ENCODE measurements at regions of chr6 and their contacts with region 1.

Region 1: DNA sequence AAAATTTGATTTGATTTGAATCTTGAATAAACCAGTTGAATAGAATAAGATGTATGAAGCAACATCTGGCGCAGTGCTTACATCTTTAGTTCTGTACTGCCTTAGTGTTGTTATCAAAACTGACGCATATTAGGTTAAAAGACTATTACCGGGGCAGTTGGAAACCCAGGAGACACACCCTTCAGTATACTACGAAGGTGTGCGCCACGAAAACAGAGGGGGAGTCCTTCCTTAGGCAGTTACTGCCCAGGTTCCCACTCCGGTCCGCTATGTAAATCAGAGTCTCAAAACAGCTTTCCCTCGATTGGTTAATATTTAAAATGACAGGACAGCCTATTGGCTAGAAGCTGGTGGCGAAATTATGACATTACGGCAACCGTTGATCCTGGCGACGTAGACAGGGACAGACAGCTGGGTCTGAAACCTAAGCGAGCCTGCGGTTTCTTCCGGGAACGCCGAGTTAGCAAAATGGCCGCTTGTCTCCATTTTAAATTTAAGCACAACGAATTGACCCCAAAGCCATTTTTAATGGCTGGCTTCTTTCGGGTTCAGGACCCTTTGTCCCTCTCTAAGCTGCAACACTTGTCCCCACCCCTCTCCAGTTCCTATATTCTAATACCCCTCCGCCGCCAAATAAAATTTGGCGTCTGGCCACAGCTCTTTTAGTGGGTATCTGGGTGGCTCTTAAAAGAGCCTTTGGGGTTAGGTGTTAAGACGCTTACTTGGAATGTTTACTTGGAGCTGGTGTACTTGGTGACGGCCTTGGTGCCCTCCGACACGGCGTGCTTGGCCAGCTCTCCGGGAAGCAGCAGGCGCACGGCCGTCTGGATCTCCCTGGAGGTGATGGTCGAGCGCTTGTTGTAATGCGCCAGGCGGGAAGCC is 35.8 kb downstream of the HFE start:
- DNase-seq: peak; percentile 79 to 99 (median 86)
- ATAC-seq: peak; percentile 62
- H3K4me3 ChIP-seq: peak overlapping the region; percentile 72
- H3K27ac ChIP-seq: peak overlapping the region; percentile 95
- H3K4me1 ChIP-seq: peaks cover 3 to 7% of the 10 kb centered on the region in 2 experiments; a peak in 4 of 5 replicates
- H3K27me3 ChIP-seq: no peaks in the 10 kb centered on the region
- CTCF ChIP-seq: peak in 1 of 3 experiments; percentile 23; a peak in 1 of 6 replicates
- EP300 ChIP-seq: peak; percentile 99
- POLR2A ChIP-seq: no peak; the same call in none of the 2 replicates
- RAD21 ChIP-seq: 0 out of 4 replicates have a peak, but pooled peaks of 1 of the 2 experiments have one; percentile 6

Region 2: GRCh38 chr6:25966711-25967110 is 156.3 kb before region 1 on chr6:
- CTCF ChIA-PET with region 1: no interaction called
- POLR2A ChIA-PET with region 1: no interaction called
- in situ Hi-C with region 1: no loop called
- intact Hi-C with region 1: no loop called
- DNase-seq: no peak
- ATAC-seq: no peak
- H3K4me3 ChIP-seq: no peak overlapping the region
- H3K27ac ChIP-seq: no peak overlapping the region
- H3K4me1 ChIP-seq: peaks cover 11 to 16% of the 10 kb centered on the region in 2 experiments
- H3K27me3 ChIP-seq: no peaks in the 10 kb centered on the region
- CTCF ChIP-seq: no peak
- EP300 ChIP-seq: no peak
- POLR2A ChIP-seq: no peak
- RAD21 ChIP-seq: no peak

Region 3: GRCh38 chr6:26054857-26055669 is 68.0 kb before region 1 on chr6:
- CTCF ChIA-PET with region 1: interaction called, 3 read pairs
- POLR2A ChIA-PET with region 1: interaction called, 33 read pairs
- in situ Hi-C with region 1: no loop called
- intact Hi-C with region 1: loop called (anchors 2 kb)
- DNase-seq: peak; percentile 81 to 95 (median 88)
- ATAC-seq: peak; percentile 68
- H3K4me3 ChIP-seq: peak overlapping the region; percentile 60
- H3K27ac ChIP-seq: peak overlapping the region; percentile 94
- H3K4me1 ChIP-seq: peaks cover 7 to 29% of the 10 kb centered on the region in 2 experiments
- H3K27me3 ChIP-seq: no peaks in the 10 kb centered on the region
- CTCF ChIP-seq: peak; percentile 24 to 42 (median 29); a peak in 3 of 6 replicates
- EP300 ChIP-seq: peak; percentile 34
- POLR2A ChIP-seq: peak; percentile 95
- RAD21 ChIP-seq: peak in 1 of 2 experiments; percentile 59; a peak in 2 of 4 replicates

Region 4: GRCh38 chr6:26097268-26097875 is 25.7 kb before region 1 on chr6:
- CTCF ChIA-PET with region 1: no interaction called
- POLR2A ChIA-PET with region 1: interaction called, 155 read pairs
- in situ Hi-C with region 1: no loop called
- intact Hi-C with region 1: no loop called
- DNase-seq: peak; percentile 67 to 85 (median 77)
- ATAC-seq: peak; percentile 91
- H3K4me3 ChIP-seq: no peak overlapping the region
- H3K27ac ChIP-seq: no peak overlapping the region
- H3K4me1 ChIP-seq: peaks cover 0 to 8% of the 10 kb centered on the region in 2 experiments; a peak in 2 of 5 replicates
- H3K27me3 ChIP-seq: no peaks in the 10 kb centered on the region
- CTCF ChIP-seq: peak; percentile 80 to 87 (median 85)
- EP300 ChIP-seq: no peak
- POLR2A ChIP-seq: no peak
- RAD21 ChIP-seq: peak; percentile 96 to 98

Region 5: GRCh38 chr6:26175428-26176181 is 52.6 kb after region 1 on chr6:
- CTCF ChIA-PET with region 1: no interaction called
- POLR2A ChIA-PET with region 1: interaction called, 73 read pairs
- in situ Hi-C with region 1: no loop called
- intact Hi-C with region 1: loop called (anchors 1 kb)
- DNase-seq: peak; percentile 60 to 88 (median 71)
- ATAC-seq: peak; percentile 41
- H3K4me3 ChIP-seq: no peak overlapping the region
- H3K27ac ChIP-seq: no peak overlapping the region
- H3K4me1 ChIP-seq: peaks cover 14% of the 10 kb centered on the region in 2 experiments
- H3K27me3 ChIP-seq: no peaks in the 10 kb centered on the region
- CTCF ChIP-seq: peak; percentile 59 to 87 (median 77)
- EP300 ChIP-seq: no peak; the same call in 1 of the 2 replicates
- POLR2A ChIP-seq: no peak
- RAD21 ChIP-seq: peak; percentile 87 to 88

Region 6: GRCh38 chr6:26285143-26286134 is 162.4 kb after region 1 on chr6:
- CTCF ChIA-PET with region 1: no interaction called
- POLR2A ChIA-PET with region 1: interaction called, 14 read pairs
- in situ Hi-C with region 1: no loop called
- intact Hi-C with region 1: loop called (anchors 2 kb)
- DNase-seq: peak; percentile 89 to 100 (median 92)
- ATAC-seq: peak; percentile 84
- H3K4me3 ChIP-seq: peak overlapping the region; percentile 50
- H3K27ac ChIP-seq: peak overlapping the region; percentile 97
- H3K4me1 ChIP-seq: peaks cover 11 to 19% of the 10 kb centered on the region in 2 experiments; a peak in 4 of 5 replicates
- H3K27me3 ChIP-seq: no peaks in the 10 kb centered on the region
- CTCF ChIP-seq: peak in 1 of 3 experiments; percentile 5; a peak in 2 of 6 replicates
- EP300 ChIP-seq: peak; percentile 96
- POLR2A ChIP-seq: peak; percentile 99
- RAD21 ChIP-seq: peak in 1 of 2 experiments; percentile 41; a peak in 3 of 4 replicates

Region 7: DNA sequence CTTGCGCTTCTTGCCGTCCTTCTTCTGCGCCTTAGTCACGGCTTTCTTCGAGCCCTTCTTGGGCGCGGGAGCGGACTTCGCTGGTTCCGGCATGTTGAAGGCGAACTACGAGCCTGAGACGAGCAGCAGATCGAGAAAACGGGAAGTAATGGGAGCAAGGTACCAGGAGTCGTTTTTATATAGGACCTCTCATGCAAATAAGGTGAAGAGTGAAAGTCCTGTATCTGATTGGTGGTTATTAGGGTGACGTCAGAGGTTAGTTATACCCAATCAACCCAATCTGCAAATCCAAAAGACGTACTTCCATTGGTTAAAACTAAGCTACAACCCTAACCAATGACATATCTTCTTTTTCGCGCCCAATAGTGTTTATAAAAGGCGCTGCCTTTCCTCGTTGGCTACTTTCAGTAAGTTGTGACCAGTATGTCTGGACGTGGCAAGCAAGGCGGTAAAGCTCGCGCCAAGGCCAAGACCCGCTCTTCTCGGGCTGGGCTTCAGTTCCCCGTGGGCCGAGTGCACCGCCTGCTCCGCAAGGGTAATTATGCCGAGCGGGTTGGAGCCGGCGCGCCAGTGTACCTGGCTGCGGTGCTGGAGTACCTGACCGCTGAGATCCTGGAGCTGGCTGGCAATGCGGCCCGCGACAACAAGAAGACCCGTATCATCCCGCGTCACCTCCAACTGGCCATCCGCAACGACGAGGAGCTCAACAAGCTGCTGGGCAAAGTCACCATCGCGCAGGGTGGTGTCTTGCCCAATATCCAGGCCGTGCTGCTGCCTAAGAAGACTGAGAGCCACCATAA is 1023.9 kb after region 1 on chr6:
- CTCF ChIA-PET with region 1: no interaction called
- POLR2A ChIA-PET with region 1: interaction called, 20 read pairs
- in situ Hi-C with region 1: no loop called
- intact Hi-C with region 1: no loop called
- DNase-seq: peak; percentile 93 to 99 (median 98)
- ATAC-seq: peak; percentile 68
- H3K4me3 ChIP-seq: peak overlapping the region; percentile 71
- H3K27ac ChIP-seq: peak overlapping the region; percentile 94
- H3K4me1 ChIP-seq: peaks cover 4 to 13% of the 10 kb centered on the region in 2 experiments
- H3K27me3 ChIP-seq: no peaks in the 10 kb centered on the region
- CTCF ChIP-seq: no peak
- EP300 ChIP-seq: no peak; the same call in 1 of the 2 replicates
- POLR2A ChIP-seq: peak; percentile 100
- RAD21 ChIP-seq: no peak; a peak in 1 of 4 replicates

Measured in K562 (cell line).